ENCODE measurements at regions of chr2 and their contacts with region 1.

Region 1: DNA sequence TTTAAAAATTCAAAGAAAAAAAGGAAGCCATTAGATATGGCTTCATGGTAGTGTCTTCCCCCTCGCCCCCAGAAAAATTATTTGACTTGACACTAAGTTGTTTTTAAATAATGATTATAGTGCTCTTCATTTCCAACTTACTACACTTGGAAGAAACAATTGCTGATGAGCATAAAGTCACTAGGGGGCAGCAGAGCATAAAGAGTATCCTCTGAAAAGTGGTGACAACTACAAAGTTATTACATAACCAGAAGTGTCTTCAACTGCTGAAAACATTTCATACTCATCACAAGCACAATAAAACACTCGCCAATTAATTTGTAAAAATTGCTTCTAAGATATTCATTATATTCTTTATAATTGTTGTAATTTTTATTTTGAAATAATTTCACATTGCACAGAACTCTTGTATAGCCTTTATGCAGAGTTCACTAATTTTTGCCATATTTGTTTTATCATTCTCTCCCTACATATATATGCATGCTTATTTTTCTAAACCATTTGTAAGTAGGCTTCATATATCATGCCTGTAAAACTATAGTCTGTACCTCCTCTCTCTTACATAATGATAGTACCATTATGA is 54.9 kb downstream of the EXOC6B start:
- DNase-seq: peak in 7 of 9 donors; percentile 46 to 75 (median 74)
- ATAC-seq: peak; percentile 84
- H3K4me3 ChIP-seq: no peak overlapping the region
- H3K4me3 Mint-ChIP-seq: peak overlapping the region in 1 of 10 donors; percentile 4
- H3K27ac ChIP-seq: no peak overlapping the region
- H3K27ac Mint-ChIP-seq: peak overlapping the region in 1 of 9 donors; percentile 41
- H3K4me1 ChIP-seq: no peaks in the 10 kb centered on the region
- H3K4me1 Mint-ChIP-seq: no peaks in the 10 kb centered on the region
- H3K27me3 ChIP-seq: no peaks in the 10 kb centered on the region
- H3K27me3 Mint-ChIP-seq: no peaks in the 10 kb centered on the region

Region 2: DNA sequence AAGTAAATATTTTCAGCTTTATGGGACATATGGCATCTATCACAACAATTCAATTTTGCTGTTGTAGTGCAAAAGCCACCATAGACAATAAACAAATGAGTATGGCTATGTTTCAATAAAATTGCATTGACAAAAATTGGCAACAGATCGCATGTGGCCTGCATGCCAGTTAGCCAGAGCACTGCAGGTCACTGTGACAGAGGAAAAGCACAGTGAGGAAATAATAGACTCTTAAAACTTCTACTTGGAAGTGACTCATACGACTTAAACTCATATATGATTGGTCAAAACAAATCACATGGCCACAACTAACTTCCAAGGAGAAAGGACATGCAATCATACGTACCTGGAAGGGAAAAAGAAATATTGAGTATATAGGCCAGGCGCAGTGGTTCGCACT is 10.5 kb after region 1 on chr2:
- CTCF ChIA-PET with region 1: no interaction called
- POLR2A ChIA-PET with region 1: no interaction called
- intact Hi-C with region 1: no loop called
- DNase-seq: no peak
- ATAC-seq: no peak
- H3K4me3 ChIP-seq: no peak overlapping the region
- H3K4me3 Mint-ChIP-seq: no peak overlapping the region
- H3K27ac ChIP-seq: no peak overlapping the region
- H3K27ac Mint-ChIP-seq: no peak overlapping the region
- H3K4me1 ChIP-seq: no peaks in the 10 kb centered on the region
- H3K4me1 Mint-ChIP-seq: peaks cover 0 to 4% (median 0%) of the 10 kb centered on the region in 7 donors
- H3K27me3 ChIP-seq: no peaks in the 10 kb centered on the region
- H3K27me3 Mint-ChIP-seq: no peaks in the 10 kb centered on the region

Region 3: GRCh38 chr2:72825241-72826155 is 54.5 kb after region 1 on chr2 and contains the start of gene EXOC6B:
- CTCF ChIA-PET with region 1: no interaction called
- POLR2A ChIA-PET with region 1: no interaction called
- intact Hi-C with region 1: loop called (anchors 1 to 2 kb)
- DNase-seq: peak; percentile 78 to 87 (median 84)
- ATAC-seq: peak; percentile 96
- H3K4me3 ChIP-seq: peak within 1 kb of the TSS; percentile 70
- H3K4me3 Mint-ChIP-seq: peak within 1 kb of the TSS; percentile 88 to 99 (median 98)
- H3K27ac ChIP-seq: peak within 1 kb of the TSS; percentile 69
- H3K27ac Mint-ChIP-seq: peak within 1 kb of the TSS; percentile 70 to 96 (median 92)
- H3K4me1 ChIP-seq: peaks cover 14 to 19% of the 10 kb centered on the region in 2 donors
- H3K4me1 Mint-ChIP-seq: peaks cover 24 to 48% (median 45%) of the 10 kb centered on the region in 7 donors
- H3K27me3 ChIP-seq: no peaks in the 10 kb centered on the region
- H3K27me3 Mint-ChIP-seq: peaks cover 0 to 12% (median 5%) of the 10 kb centered on the region in 5 donors
- total RNA-seq, gene EXOC6B: 14.3 to 21.9 (median 18.0) TPM

Region 4: GRCh38 chr2:72963423-72964145 is 192.6 kb after region 1 on chr2:
- CTCF ChIA-PET with region 1: no interaction called
- POLR2A ChIA-PET with region 1: no interaction called
- intact Hi-C with region 1: no loop called
- DNase-seq: no peak
- ATAC-seq: no peak
- H3K4me3 ChIP-seq: no peak overlapping the region
- H3K4me3 Mint-ChIP-seq: no peak overlapping the region
- H3K27ac ChIP-seq: no peak overlapping the region
- H3K27ac Mint-ChIP-seq: no peak overlapping the region
- H3K4me1 ChIP-seq: no peaks in the 10 kb centered on the region
- H3K4me1 Mint-ChIP-seq: peaks cover 0 to 12% (median 0%) of the 10 kb centered on the region in 7 donors
- H3K27me3 ChIP-seq: no peaks in the 10 kb centered on the region
- H3K27me3 Mint-ChIP-seq: no peaks in the 10 kb centered on the region

Region 5: GRCh38 chr2:72973566-72974435 is 202.8 kb after region 1 on chr2:
- CTCF ChIA-PET with region 1: no interaction called
- POLR2A ChIA-PET with region 1: no interaction called
- intact Hi-C with region 1: loop called in 1 of 2 experiments (anchors 10 kb)
- DNase-seq: peak in 6 of 9 donors; percentile 13 to 40 (median 20)
- ATAC-seq: peak; percentile 86
- H3K4me3 ChIP-seq: no peak overlapping the region
- H3K4me3 Mint-ChIP-seq: no peak overlapping the region
- H3K27ac ChIP-seq: no peak overlapping the region
- H3K27ac Mint-ChIP-seq: no peak overlapping the region
- H3K4me1 ChIP-seq: no peaks in the 10 kb centered on the region
- H3K4me1 Mint-ChIP-seq: no peaks in the 10 kb centered on the region
- H3K27me3 ChIP-seq: no peaks in the 10 kb centered on the region
- H3K27me3 Mint-ChIP-seq: peaks cover 0 to 7% (median 0%) of the 10 kb centered on the region in 5 donors

Measured in naive thymus-derived CD4-positive, alpha-beta T cell (primary cell).